Cardiac septum (tissue), 1 donor: ENCODE measurements at regions of chr22 and their contacts with region 1.

Region 1: DNA sequence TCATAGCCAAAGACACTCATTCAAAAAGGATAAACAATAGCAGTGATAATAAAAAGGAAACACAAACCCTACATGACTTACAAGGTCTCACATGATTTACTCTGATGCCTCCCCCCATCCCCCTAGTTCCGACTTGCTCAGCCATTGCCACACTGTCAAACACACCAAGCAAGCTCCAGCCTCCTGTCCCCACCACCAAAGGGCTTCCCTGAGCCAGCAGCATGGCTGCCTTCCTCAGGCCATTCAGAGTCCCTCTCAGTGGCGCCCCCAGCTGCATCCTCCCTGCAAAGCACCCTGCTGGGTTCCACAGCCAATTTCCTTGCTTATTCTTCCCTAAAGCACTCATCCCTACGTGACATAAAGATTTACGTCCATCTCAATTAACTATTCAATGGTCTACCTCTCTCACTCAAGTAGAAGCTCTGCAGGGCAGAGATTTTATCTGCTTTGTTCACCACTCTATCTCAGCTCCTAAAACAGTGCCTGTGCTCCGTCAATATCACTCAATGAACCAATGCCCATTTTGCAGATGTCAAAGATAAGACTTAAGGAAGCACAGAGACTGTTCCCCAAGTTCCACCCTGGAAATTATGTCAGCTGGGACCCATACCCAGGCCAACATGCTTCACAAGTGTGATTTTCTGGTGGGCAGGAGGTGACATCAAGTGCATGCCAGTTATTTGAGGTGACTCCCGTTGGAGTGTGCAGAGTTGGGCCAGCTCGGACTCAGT is 106.9 kb downstream of the SYN3 start:
- DNase-seq: no peak

Region 2: GRCh38 chr22:32880893-32881596 is 70.2 kb before region 1 on chr22:
- intact Hi-C with region 1: loop called (anchors 5 kb)
- DNase-seq: peak; percentile 88

Region 3: DNA sequence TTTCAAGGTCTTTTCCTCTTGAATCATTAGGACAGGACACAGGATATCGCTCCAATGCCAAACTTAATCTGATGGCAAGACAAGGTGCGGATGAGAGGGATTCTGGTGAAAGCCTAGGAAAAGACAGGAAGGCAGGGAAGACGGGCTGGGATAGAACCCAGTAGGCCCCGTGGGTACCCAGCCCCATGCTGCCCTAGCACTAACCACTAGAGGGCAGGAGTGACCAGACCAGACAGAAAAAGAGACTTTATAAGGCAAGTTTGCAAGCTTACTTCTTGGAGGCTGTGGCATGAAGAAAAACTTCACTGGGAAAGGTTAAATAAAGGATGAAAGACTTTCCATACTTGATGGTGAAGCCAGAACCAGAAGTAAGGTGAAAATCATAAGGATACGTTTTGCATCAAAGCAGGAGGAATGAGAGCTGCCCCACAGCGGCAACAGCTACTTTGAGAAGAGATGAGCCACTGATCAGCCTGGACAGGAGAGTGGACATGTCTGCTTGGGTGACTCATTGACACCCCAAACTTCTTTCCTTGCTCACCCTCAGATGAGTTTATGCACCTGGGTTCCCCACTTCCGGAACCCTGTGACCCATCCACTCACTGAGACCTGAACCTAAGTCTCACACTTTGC is 67.1 kb after region 1 on chr22:
- intact Hi-C with region 1: no loop called
- DNase-seq: peak; percentile 67

Region 4: DNA sequence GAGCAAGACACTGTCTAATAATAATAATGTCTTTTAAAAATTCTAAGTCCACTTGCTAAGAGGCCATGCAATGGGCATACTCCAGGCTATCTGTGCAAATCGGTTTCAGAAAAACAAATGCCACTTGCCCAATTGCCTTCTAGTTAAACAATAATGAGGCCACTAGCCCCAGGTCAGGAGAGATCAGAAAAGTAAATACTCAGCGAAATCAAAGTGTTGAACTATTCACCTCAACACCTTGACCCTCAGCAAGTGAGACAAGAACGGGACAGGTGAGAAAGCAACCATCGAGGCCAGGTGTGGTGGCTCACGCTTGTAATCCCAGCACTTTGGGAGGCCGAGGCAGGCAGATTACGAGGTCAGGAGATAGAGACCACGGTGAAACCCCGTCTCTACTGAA is 179.2 kb after region 1 on chr22:
- intact Hi-C with region 1: no loop called
- DNase-seq: no peak